Activated CD4-positive, alpha-beta T cell treated with anti-CD3 and anti-CD28 coated beads for 36 hours (primary cell): ENCODE measurements at regions of chr21 and their contacts with region 1.

Region 1: DNA sequence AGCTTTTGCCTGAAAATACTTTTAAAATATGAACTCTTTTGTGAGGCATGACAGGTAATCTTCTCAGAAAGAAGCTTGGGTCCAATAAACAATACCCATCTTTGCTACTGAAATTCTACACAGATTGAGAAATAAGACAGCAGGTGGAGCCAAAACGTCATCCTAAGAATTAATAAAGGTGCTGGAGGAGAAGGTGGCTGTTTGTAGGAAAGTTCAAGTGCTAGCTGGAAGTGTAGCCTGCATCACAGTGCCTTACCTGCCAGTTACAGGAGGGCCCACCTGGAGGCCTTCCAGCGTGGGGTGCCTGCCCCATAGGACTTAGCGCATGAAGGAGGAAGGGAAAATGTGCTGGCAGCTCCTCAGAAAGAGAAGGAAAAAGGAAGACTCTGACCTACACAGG is 93.7 kb downstream of the TTC3 start:
- DNase-seq: no peak
- ATAC-seq: no peak
- H3K4me3 Mint-ChIP-seq: no peak overlapping the region
- H3K27ac Mint-ChIP-seq: no peak overlapping the region
- H3K4me1 Mint-ChIP-seq: no peaks in the 10 kb centered on the region
- H3K27me3 Mint-ChIP-seq: no peaks in the 10 kb centered on the region

Region 2: DNA sequence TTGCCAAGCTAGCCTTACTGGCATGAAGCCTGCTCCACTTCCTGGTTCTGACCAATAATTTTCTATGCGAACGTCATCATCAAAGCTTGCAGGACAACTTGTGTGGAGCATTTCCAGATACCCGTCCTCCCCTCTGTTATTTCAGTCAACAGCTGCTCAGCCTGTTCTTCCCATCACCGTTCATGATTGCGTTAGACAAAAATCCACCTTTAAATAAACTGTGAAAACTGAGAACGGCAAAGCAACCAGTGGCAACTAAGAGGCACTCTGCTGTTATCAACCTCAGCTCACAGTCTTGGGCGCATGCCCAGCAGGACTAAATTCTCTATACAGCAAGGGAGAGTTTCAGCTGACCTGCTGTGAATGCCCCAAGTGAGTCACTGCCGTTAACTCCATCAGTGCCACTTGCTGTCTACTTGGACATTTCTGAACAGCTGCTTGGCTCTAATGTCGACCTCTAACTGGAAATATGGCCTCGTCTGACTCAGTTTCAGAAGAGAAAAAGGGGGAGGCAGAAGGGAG is 1910.2 kb before region 1 on chr21:
- CTCF ChIA-PET with region 1: no interaction called
- POLR2A ChIA-PET with region 1: no interaction called
- intact Hi-C with region 1: no loop called
- DNase-seq: no peak
- ATAC-seq: no peak
- H3K4me3 Mint-ChIP-seq: no peak overlapping the region
- H3K27ac Mint-ChIP-seq: no peak overlapping the region
- H3K4me1 Mint-ChIP-seq: peaks cover 32% of the 10 kb centered on the region
- H3K27me3 Mint-ChIP-seq: peaks cover 5% of the 10 kb centered on the region

Region 3: DNA sequence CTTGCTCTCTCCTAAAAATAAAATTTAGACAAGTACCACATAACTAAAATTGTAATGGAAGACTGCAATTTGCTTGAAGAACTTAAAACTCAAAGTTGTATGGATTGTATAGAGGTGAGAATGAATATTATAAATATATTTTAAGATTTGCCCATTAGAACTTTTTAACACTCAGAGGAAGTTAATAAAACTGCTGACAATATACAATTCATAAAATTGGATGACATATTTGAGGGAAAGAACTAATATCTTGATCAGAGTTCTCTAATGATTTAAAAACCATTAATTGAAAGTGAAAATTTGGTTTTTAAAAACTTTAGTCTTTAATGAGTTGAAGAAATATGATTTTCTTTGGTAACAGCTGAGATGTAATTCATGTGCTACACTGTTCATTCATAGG is 72.8 kb before region 1 on chr21:
- CTCF ChIA-PET with region 1: no interaction called
- POLR2A ChIA-PET with region 1: no interaction called
- intact Hi-C with region 1: no loop called
- DNase-seq: no peak
- ATAC-seq: no peak
- H3K4me3 Mint-ChIP-seq: no peak overlapping the region
- H3K27ac Mint-ChIP-seq: no peak overlapping the region
- H3K4me1 Mint-ChIP-seq: peaks cover 5% of the 10 kb centered on the region
- H3K27me3 Mint-ChIP-seq: no peaks in the 10 kb centered on the region

Region 4: GRCh38 chr21:37642493-37642892 is 475.8 kb after region 1 on chr21:
- CTCF ChIA-PET with region 1: no interaction called
- POLR2A ChIA-PET with region 1: no interaction called
- intact Hi-C with region 1: loop called in 1 of 2 experiments (anchors 5 kb)
- DNase-seq: peak; percentile 63
- ATAC-seq: peak; percentile 78
- H3K4me3 Mint-ChIP-seq: no peak overlapping the region
- H3K27ac Mint-ChIP-seq: no peak overlapping the region
- H3K4me1 Mint-ChIP-seq: no peaks in the 10 kb centered on the region
- H3K27me3 Mint-ChIP-seq: peaks cover 34% of the 10 kb centered on the region